ENCODE measurements at regions of chr21 and their contacts with region 1.

Region 1: DNA sequence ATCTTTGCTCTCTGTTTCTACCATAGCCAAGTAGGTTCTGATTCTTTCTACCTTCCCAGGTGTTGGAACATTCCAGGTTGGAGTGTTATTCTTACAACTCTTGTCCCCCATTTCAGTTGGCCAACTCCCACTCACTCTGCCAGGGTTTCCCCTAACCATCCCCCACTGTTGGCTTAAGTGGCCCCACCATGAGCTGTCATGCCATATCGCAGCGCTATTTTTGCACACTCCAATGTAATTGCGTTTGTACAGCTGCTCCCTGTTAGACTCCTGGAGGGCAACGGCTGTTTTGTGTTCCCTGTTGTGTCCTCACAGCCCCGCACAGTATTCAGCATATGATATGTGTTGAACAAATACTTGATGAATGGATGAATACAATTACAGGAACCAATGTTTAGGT is 117.7 kb upstream of the ETS2 start:
- DNase-seq: no peak
- H3K4me3 ChIP-seq: no peak overlapping the region
- H3K27ac ChIP-seq: no peak overlapping the region
- H3K4me1 ChIP-seq: no peaks in the 10 kb centered on the region
- H3K27me3 ChIP-seq: peaks cover 13% of the 10 kb centered on the region
- CTCF ChIP-seq: no peak

Region 2: GRCh38 chr21:38614192-38614957 is 73.7 kb before region 1 on chr21:
- CTCF ChIA-PET with region 1: no interaction called
- dilution Hi-C with region 1: loop called (anchors 5 kb)
- in situ Hi-C with region 1: no loop called
- intact Hi-C with region 1: no loop called
- DNase-seq: no peak
- H3K4me3 ChIP-seq: no peak overlapping the region
- H3K27ac ChIP-seq: no peak overlapping the region
- H3K4me1 ChIP-seq: no peaks in the 10 kb centered on the region
- H3K27me3 ChIP-seq: no peaks in the 10 kb centered on the region
- CTCF ChIP-seq: peak in 1 of 2 donors; percentile 17

Region 3: DNA sequence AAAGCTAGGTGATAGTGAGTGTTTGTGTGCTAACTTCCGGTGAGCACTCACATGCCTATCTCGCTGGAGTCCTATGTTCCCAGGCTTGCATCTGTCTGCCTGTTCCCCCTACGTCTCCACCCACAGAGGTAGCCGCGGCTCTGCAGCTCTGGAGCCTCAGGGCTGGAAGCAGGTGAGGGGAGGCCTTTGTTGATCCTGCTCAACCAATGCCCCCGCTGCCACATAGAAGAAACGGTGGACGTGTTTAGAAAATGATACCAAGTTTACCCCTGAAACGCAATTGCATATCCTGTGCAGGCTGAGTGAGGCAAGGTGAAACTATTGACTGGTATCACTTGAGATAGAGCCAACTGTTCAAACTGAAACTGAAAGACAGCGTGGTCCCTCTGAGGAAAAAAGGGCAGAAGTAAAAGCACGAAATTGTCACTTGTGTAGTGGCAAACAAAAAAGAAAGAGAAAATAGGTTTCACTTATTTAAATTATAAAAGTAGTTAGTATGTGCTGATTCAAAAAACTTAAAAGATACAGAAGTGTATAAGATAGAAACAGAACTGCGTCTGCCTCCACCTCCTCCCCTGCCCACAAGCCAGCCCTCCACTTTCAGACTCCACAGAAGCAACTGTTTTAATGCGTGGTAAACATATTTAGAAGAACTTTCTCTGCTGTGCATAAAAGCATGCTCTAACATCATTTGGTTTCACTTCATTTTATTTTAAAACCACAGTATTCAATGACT is 79.1 kb after region 1 on chr21:
- CTCF ChIA-PET with region 1: no interaction called
- dilution Hi-C with region 1: no loop called
- in situ Hi-C with region 1: no loop called
- intact Hi-C with region 1: no loop called
- DNase-seq: peak; percentile 83
- H3K4me3 ChIP-seq: peak overlapping the region; percentile 6 to 13 (median 11)
- H3K27ac ChIP-seq: peak overlapping the region; percentile 66
- H3K4me1 ChIP-seq: no peaks in the 10 kb centered on the region
- H3K27me3 ChIP-seq: no peaks in the 10 kb centered on the region
- CTCF ChIP-seq: no peak

Measured in mammary epithelial cell (primary cell).